HEK293 (cell line): ENCODE measurements at regions of chr4 and their contacts with region 1.

Region 1: DNA sequence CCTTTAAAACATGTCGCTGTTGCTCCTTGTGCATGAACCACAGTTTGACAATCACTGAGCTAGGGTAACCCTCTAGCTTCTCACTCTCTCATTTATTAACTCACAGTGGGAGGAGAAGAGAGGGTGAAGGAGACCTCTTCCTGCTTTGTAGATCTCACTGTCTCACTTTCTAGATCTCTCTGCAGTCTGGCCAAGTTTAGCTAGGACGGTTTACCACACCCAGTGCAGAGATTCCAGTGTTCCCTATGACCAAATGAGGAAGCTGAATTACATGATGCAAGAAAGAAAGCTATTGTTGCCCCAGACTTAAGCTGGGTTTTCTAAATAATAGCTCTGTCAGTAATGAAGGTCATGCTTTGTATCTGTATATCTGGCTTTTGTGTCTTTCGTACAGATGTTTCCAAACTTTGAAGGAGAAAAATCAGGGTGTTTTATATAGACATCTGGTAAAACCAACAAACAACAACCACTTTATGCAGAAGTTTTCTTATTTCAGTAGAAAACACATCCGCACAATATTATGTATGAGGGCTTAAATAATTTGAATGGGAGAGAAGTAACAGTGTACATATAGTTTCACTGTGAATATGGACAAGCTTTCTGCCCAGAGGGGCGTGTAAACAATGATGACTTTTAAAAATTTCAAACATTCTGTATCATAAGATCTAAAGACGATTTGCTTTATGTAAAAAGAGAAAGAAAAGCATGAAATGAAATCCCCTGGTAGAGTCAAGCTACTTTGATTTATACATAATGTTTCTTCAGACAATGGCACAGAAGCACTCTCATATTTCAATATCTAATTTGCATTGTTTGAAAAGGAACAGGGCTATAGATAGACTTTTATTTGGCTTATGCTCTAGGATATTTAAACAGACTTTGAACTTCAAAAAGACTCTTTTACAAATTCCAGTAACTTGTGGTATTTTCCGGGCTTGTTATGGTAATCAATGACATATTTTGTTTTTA is 582.3 kb downstream of the FSTL5 start:
- H3K4me3 ChIP-seq: no peak overlapping the region
- H3K27ac ChIP-seq: no peak overlapping the region
- H3K4me1 ChIP-seq: no peaks in the 10 kb centered on the region
- CTCF ChIP-seq: no peak

Region 2: GRCh38 chr4:161359491-161359890 is 222.1 kb before region 1 on chr4:
- CTCF ChIA-PET with region 1: no interaction called
- POLR2A ChIA-PET with region 1: no interaction called
- H3K4me3 ChIP-seq: no peak overlapping the region
- H3K27ac ChIP-seq: no peak overlapping the region
- H3K4me1 ChIP-seq: no peaks in the 10 kb centered on the region
- CTCF ChIP-seq: no peak

Region 3: DNA sequence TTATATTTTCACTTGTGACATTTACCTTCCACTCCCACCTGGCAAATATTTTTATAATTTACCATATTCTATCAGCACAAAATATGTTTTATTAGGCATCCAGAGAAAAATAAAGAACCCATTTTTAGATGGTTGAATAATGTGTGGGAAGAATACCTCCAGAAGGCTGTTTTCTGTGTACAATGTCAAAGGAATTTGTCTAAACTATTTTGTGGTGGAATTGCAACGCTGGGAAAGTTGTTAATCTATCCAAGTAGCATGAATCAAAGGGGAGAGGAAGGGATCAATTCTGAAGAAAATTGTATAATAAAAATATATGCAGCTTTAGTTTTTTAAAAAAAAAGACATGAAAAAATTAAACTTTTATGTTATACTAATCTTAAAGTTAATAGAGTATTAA is 124.2 kb before region 1 on chr4:
- CTCF ChIA-PET with region 1: no interaction called
- POLR2A ChIA-PET with region 1: no interaction called
- H3K4me3 ChIP-seq: no peak overlapping the region
- H3K27ac ChIP-seq: no peak overlapping the region
- H3K4me1 ChIP-seq: no peaks in the 10 kb centered on the region
- CTCF ChIP-seq: no peak

Region 4: GRCh38 chr4:161555689-161556660 is 25.6 kb before region 1 on chr4:
- CTCF ChIA-PET with region 1: no interaction called
- POLR2A ChIA-PET with region 1: no interaction called
- H3K4me3 ChIP-seq: no peak overlapping the region
- H3K27ac ChIP-seq: no peak overlapping the region
- H3K4me1 ChIP-seq: no peaks in the 10 kb centered on the region
- CTCF ChIP-seq: no peak

Region 5: GRCh38 chr4:163419074-163419473 is 1837.5 kb after region 1 on chr4:
- CTCF ChIA-PET with region 1: interaction called, 10 read pairs
- POLR2A ChIA-PET with region 1: no interaction called
- H3K4me3 ChIP-seq: no peak overlapping the region
- H3K27ac ChIP-seq: no peak overlapping the region
- H3K4me1 ChIP-seq: no peaks in the 10 kb centered on the region
- CTCF ChIP-seq: no peak